ENCODE measurements at regions of chr10 and their contacts with region 1.

Region 1: DNA sequence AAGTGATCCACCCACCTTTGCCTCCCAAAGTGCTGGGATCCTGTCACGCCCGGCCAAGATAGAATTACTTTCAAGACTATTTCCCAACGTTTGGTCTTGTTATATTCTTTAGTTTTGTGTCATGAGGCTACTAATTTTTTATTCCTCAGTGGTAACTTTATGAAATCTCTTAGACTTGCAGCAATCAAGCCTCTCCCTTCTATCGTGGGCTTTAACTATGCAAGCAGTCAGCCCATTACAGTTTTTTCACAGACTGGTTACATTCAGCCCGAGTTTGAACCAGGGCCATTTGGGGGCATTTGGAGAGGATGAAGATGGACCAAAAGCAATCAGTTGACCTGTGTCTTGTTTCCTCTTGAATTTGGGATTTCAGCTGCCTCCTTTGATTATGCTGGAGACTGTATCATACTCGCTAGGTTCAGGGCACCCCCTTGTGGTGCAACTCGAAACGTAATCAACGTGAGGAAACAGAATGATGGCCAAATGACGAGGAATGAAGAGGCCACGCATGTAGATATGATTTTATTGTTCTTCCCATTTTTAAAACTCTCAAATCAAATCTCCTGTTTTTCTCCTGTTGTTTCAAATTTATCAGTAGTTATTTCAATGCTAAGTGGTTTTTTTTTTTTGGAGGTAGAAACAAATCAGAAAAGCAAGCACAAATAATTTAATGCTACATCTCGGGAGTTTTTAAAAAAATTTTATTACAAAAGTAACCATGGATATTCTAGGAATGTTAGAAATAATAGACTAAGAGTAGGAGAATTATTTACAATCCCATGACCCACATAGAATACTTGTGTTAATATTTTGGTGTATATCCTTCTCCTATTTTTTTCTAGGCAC is 151.6 kb downstream of the KIAA1217 start:
- DNase-seq: peak; percentile 87
- H3K4me3 Mint-ChIP-seq: no peak overlapping the region
- H3K27ac Mint-ChIP-seq: no peak overlapping the region
- H3K4me1 Mint-ChIP-seq: peaks cover 6% of the 10 kb centered on the region
- H3K27me3 Mint-ChIP-seq: no peaks in the 10 kb centered on the region
- CTCF ChIP-seq: peak; percentile 71

Region 2: DNA sequence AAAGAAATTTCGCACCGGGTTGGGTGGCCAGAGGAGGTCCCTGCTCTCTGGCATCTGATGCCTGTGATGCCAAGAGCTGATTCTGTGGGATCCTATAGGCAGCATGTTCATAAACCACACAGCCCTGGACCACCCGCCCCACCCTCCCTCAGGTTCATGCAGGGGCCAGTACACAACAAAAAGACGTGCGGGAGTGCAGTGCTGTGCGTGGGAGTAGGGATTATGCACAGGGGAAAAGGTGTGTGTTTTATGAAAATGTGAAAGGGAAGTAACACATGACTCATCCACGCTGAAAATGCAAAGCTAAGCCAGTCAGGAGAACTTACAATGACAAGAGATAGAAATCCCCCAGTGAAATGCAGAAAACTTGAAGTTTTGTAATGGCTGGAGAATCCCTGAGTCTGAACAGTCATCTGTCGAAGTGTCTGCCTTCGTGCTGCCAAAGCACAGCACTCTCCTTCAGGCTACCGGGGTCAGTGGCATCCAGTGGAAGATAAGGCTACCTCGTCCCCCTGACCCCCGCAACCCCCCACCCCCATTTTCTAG is 150.5 kb before region 1 on chr10:
- CTCF ChIA-PET with region 1: interaction called, 8 read pairs
- POLR2A ChIA-PET with region 1: interaction called, 12 read pairs
- intact Hi-C with region 1: no loop called
- DNase-seq: peak; percentile 74
- H3K4me3 Mint-ChIP-seq: peak overlapping the region; percentile 76
- H3K27ac Mint-ChIP-seq: peak overlapping the region; percentile 1
- H3K4me1 Mint-ChIP-seq: peaks cover 22% of the 10 kb centered on the region
- H3K27me3 Mint-ChIP-seq: no peaks in the 10 kb centered on the region
- CTCF ChIP-seq: no peak

Region 3: GRCh38 chr10:24223953-24224352 is 136.6 kb before region 1 on chr10:
- CTCF ChIA-PET with region 1: no interaction called
- POLR2A ChIA-PET with region 1: no interaction called
- intact Hi-C with region 1: no loop called
- DNase-seq: no peak
- H3K4me3 Mint-ChIP-seq: no peak overlapping the region
- H3K27ac Mint-ChIP-seq: no peak overlapping the region
- H3K4me1 Mint-ChIP-seq: no peaks in the 10 kb centered on the region
- H3K27me3 Mint-ChIP-seq: no peaks in the 10 kb centered on the region
- CTCF ChIP-seq: no peak

Region 4: GRCh38 chr10:24249829-24250415 is 110.6 kb before region 1 on chr10:
- CTCF ChIA-PET with region 1: interaction called, 8 read pairs
- POLR2A ChIA-PET with region 1: interaction called, 5 read pairs
- intact Hi-C with region 1: loop called (anchors 1 kb)
- DNase-seq: peak; percentile 90
- H3K4me3 Mint-ChIP-seq: peak overlapping the region; percentile 28
- H3K27ac Mint-ChIP-seq: peak overlapping the region; percentile 91
- H3K4me1 Mint-ChIP-seq: peaks cover 32% of the 10 kb centered on the region
- H3K27me3 Mint-ChIP-seq: no peaks in the 10 kb centered on the region
- CTCF ChIP-seq: no peak

Region 5: GRCh38 chr10:24292304-24293293 is 67.9 kb before region 1 on chr10:
- CTCF ChIA-PET with region 1: interaction called, 5 read pairs
- POLR2A ChIA-PET with region 1: no interaction called
- intact Hi-C with region 1: loop called (anchors 1 kb)
- DNase-seq: peak; percentile 11
- H3K4me3 Mint-ChIP-seq: no peak overlapping the region
- H3K27ac Mint-ChIP-seq: peak overlapping the region; percentile 70
- H3K4me1 Mint-ChIP-seq: peaks cover 30% of the 10 kb centered on the region
- H3K27me3 Mint-ChIP-seq: no peaks in the 10 kb centered on the region
- CTCF ChIP-seq: no peak

Region 6: DNA sequence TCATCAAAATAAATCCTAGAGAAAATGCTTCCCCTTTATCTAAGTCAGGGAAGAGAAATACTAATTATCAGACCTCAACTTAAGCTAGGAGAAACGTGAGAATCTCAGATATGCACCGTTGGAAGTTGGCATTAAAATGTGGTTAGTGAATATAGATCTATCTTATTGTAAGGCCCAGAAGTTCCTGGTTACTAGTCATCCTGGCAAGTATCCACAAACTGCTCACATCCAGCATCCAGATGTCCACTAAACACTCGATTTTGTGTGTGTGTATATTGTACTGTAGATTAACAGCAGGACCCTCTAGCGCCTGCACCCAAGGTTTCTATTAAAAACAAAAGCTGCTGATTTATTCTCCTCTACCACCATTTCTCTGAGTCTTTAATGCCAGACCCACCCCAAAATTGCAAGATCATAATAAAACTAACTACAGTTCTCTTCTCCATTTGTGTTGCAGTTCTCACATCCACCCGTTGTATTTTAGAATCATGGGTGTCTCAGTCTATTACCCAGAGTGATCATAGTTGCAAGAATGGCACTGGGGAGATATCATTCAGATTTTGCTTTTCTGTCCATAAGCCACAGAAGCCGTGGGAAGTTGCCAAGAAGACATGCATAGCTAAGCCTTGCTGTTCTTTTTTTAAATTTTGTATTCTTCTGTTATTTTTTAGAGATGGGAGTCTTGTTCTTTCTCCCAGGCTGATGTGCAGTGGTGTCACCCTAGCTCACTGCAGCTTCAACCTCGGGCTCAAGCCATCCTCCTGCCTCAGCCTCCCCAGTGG is 13.8 kb after region 1 on chr10:
- CTCF ChIA-PET with region 1: interaction called, 10 read pairs
- POLR2A ChIA-PET with region 1: interaction called, 7 read pairs
- intact Hi-C with region 1: no loop called
- DNase-seq: no peak
- H3K4me3 Mint-ChIP-seq: no peak overlapping the region
- H3K27ac Mint-ChIP-seq: peak overlapping the region; percentile 35
- H3K4me1 Mint-ChIP-seq: no peaks in the 10 kb centered on the region
- H3K27me3 Mint-ChIP-seq: no peaks in the 10 kb centered on the region
- CTCF ChIP-seq: no peak

Region 7: DNA sequence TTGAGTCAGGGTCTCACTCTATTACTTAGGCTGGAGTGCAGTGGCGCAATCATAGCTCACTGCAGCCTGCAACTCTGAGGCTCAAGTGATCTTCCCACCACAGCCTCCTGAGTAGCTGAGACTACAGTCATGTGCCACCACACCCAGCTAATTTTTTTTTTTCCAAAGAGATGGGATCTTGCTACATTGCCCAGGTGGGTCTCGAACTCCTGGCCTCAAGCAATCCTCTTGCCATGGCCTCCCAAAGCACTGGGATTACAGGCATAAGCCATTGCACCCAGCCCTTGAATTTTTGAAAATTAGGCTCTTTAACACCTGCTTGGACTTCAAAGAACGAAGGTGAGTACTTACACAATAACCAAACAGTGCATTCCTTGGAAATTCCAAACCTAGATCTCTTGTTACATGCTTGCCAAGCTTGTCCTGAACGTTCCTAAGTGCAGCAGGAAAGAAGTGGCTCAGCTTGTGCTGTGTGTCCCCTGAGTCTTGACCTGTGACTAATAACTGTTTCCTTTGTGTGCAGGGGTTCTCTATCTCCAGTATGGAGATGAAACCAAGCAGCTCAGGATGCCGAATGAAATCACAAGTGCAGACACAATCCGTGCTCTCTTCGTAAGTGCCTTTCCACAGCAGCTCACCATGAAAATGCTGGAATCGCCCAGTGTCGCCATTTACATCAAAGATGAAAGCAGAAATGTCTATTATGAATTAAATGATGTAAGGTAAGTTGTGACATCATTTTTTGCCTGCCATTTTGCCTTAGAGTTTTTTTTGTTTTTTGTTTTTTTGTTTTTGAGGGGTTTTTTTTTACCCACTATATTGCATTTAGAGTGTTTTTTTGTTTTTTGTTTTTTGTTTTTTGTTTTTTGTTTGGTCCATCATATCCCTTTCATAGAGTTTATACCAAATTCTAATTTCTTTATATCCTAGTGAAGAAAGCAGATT is 72.2 kb after region 1 on chr10:
- CTCF ChIA-PET with region 1: no interaction called
- POLR2A ChIA-PET with region 1: no interaction called
- intact Hi-C with region 1: no loop called
- DNase-seq: peak; percentile 66
- H3K4me3 Mint-ChIP-seq: no peak overlapping the region
- H3K27ac Mint-ChIP-seq: peak overlapping the region; percentile 39
- H3K4me1 Mint-ChIP-seq: peaks cover 15% of the 10 kb centered on the region
- H3K27me3 Mint-ChIP-seq: no peaks in the 10 kb centered on the region
- CTCF ChIP-seq: no peak

Region 8: GRCh38 chr10:24503461-24504320 is 143.2 kb after region 1 on chr10:
- CTCF ChIA-PET with region 1: interaction called, 9 read pairs
- POLR2A ChIA-PET with region 1: no interaction called
- intact Hi-C with region 1: loop called (anchors 2 kb)
- DNase-seq: peak; percentile 81
- H3K4me3 Mint-ChIP-seq: no peak overlapping the region
- H3K27ac Mint-ChIP-seq: peak overlapping the region; percentile 23
- H3K4me1 Mint-ChIP-seq: no peaks in the 10 kb centered on the region
- H3K27me3 Mint-ChIP-seq: no peaks in the 10 kb centered on the region
- CTCF ChIP-seq: peak; percentile 86

Measured in MCF 10A (cell line).